ENCODE measurements at regions of chr5 and their contacts with region 1.

Region 1: GRCh38 chr5:67209142-67209771 is 12.7 kb upstream of the CD180 start:
- DNase-seq: peak; percentile 78
- H3K4me3 Mint-ChIP-seq: no peak overlapping the region
- H3K27ac Mint-ChIP-seq: no peak overlapping the region
- H3K4me1 Mint-ChIP-seq: peaks cover 67% of the 10 kb centered on the region
- H3K27me3 Mint-ChIP-seq: no peaks in the 10 kb centered on the region
- CTCF ChIP-seq: peak; percentile 67

Region 2: GRCh38 chr5:66814146-66814991 is 394.9 kb before region 1 on chr5:
- CTCF ChIA-PET with region 1: no interaction called
- intact Hi-C with region 1: loop called (anchors 2 kb)
- DNase-seq: peak; percentile 54
- H3K4me3 Mint-ChIP-seq: no peak overlapping the region
- H3K27ac Mint-ChIP-seq: no peak overlapping the region
- H3K4me1 Mint-ChIP-seq: no peaks in the 10 kb centered on the region
- H3K27me3 Mint-ChIP-seq: no peaks in the 10 kb centered on the region
- CTCF ChIP-seq: peak; percentile 72

Region 3: DNA sequence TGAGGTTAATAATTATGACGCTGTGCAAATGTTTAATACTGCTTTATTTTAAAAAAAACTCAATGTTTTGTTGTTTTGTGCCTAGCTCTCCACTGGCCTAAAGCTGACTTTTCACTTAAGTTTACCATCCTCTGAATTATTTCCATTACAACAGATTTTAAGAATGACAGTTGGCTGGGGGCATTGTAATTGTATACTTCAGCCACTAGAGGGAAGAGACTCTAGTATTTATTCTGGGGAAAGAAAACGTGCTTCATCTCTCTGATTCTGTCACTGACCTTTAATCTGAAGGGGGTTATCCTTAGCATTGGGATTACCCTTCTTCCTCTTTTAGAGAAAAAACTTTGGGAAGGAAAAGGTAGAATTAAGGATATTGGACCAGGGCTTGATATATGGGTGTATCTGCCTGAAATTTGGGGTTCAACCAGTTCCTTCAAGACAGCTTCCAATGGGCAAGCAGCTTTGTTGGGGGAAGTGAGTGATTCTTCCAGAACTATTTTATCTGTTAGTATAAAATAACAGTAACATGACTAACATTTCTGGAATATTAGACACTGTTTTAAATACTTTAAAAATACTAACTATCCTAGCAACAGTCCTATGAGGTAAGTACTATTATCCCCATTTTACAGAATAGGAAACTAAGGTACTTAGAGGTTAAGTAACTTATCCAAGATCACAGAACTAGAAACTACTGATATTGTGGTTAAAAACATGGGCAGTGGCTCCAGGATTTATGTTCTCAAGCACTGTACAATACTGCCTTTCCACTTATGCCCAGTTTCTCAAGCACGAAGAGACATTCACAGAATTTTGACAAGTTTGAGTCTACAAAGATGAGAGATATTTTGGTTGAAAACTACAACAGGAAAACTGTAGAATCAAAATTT is 221.1 kb before region 1 on chr5:
- CTCF ChIA-PET with region 1: interaction called, 5 read pairs
- intact Hi-C with region 1: loop called (anchors 5 kb)
- DNase-seq: no peak
- H3K4me3 Mint-ChIP-seq: no peak overlapping the region
- H3K27ac Mint-ChIP-seq: no peak overlapping the region
- H3K4me1 Mint-ChIP-seq: no peaks in the 10 kb centered on the region
- H3K27me3 Mint-ChIP-seq: peaks cover 17% of the 10 kb centered on the region
- CTCF ChIP-seq: peak; percentile 77

Region 4: GRCh38 chr5:67133776-67134175 is 75.5 kb before region 1 on chr5:
- CTCF ChIA-PET with region 1: no interaction called
- intact Hi-C with region 1: no loop called
- DNase-seq: no peak
- H3K4me3 Mint-ChIP-seq: no peak overlapping the region
- H3K27ac Mint-ChIP-seq: no peak overlapping the region
- H3K4me1 Mint-ChIP-seq: no peaks in the 10 kb centered on the region
- H3K27me3 Mint-ChIP-seq: no peaks in the 10 kb centered on the region
- CTCF ChIP-seq: no peak

Region 5: GRCh38 chr5:67156976-67157583 is 52.2 kb before region 1 on chr5:
- CTCF ChIA-PET with region 1: interaction called, 7 read pairs
- intact Hi-C with region 1: loop called (anchors 1 kb)
- DNase-seq: peak; percentile 64
- H3K4me3 Mint-ChIP-seq: no peak overlapping the region
- H3K27ac Mint-ChIP-seq: peak overlapping the region; percentile 47
- H3K4me1 Mint-ChIP-seq: peaks cover 33% of the 10 kb centered on the region
- H3K27me3 Mint-ChIP-seq: no peaks in the 10 kb centered on the region
- CTCF ChIP-seq: peak; percentile 46

Region 6: GRCh38 chr5:67165526-67166459 is 43.5 kb before region 1 on chr5:
- CTCF ChIA-PET with region 1: interaction called, 22 read pairs
- intact Hi-C with region 1: loop called (anchors 1 kb)
- DNase-seq: peak; percentile 89
- H3K4me3 Mint-ChIP-seq: peak overlapping the region; percentile 36
- H3K27ac Mint-ChIP-seq: peak overlapping the region; percentile 57
- H3K4me1 Mint-ChIP-seq: peaks cover 14% of the 10 kb centered on the region
- H3K27me3 Mint-ChIP-seq: no peaks in the 10 kb centered on the region
- CTCF ChIP-seq: peak; percentile 76